Psoas muscle (tissue), 8 donors: ENCODE measurements at regions of chr14 and their contacts with region 1.

Region 1: DNA sequence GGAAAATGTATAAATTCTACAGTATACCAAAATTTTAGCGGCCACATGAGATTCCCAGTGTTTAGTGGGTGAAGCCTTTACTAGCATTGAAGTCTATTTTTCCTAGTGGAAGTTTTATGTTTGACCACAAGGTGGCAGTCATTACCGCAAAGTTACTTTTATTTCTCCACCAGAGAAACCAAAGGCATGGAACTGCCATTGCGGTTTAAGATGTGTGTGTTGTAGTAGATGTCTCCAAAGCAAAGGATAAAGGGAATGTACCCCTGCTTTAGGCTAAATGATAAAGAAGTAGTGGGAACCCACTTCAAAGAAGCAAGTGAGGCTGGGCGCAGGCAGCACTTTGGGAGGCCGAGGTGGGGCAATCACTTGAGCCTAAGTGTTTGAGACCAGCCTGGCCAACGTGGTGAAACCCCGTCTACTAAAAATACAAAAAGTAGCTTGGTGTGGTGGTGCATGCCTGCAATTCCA is 140.5 kb downstream of the PRKCH start:
- DNase-seq: no peak
- ATAC-seq: peak; percentile 63 to 82 (median 72)
- H3K4me3 ChIP-seq: no peak overlapping the region
- H3K27ac ChIP-seq: no peak overlapping the region
- H3K4me1 ChIP-seq: no peaks in the 10 kb centered on the region
- H3K27me3 ChIP-seq: no peaks in the 10 kb centered on the region
- CTCF ChIP-seq: peak; percentile 89

Region 2: DNA sequence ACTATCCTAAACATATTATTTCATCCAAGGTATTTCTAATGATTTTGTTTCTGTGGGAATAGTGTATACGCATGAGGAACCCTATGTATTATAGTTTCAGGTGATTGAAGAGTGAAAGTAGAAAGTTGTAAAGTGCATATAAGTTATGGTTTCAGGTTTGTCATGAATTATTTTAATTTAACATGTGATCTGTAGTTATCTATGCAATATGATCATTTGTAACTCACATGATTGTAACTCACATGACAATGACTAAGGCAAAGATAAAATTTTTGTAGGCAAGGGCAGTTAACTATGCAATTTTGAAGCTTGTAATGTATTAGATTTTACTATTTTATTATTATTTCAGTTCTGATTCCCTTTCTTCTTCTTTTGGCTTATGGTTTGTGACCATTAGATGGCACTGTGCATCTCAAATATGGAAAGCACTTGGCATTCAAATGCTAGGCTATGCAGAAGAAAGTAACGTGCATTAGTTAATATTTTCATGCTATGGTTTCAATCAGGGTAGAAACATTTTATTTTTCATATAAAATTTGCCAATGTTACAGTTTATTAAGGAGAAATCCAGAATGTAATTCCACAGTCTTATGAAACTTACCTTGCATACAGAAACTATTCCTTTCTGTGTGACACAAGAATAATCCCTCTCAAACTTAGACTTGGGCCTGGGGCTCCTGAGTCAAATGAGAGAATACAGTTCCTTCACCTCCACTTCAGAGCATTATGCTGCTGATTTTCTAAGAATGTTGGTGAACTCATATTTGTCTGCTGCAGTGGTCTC is 164.9 kb before region 1 on chr14:
- intact Hi-C with region 1: loop called in 1 of 2 experiments (anchors 5 kb)
- DNase-seq: no peak
- ATAC-seq: peak in 3 of 4 donors; percentile 41 to 80 (median 75)
- H3K4me3 ChIP-seq: no peak overlapping the region
- H3K27ac ChIP-seq: no peak overlapping the region
- H3K4me1 ChIP-seq: peaks cover 15% of the 10 kb centered on the region
- H3K27me3 ChIP-seq: no peaks in the 10 kb centered on the region
- CTCF ChIP-seq: peak; percentile 73

Region 3: GRCh38 chr14:61730756-61731373 is 269.0 kb after region 1 on chr14:
- intact Hi-C with region 1: loop called in 1 of 2 experiments (anchors 5 kb)
- DNase-seq: no peak
- ATAC-seq: peak in 1 of 4 donors; percentile 44
- H3K4me3 ChIP-seq: no peak overlapping the region
- H3K27ac ChIP-seq: no peak overlapping the region
- H3K4me1 ChIP-seq: no peaks in the 10 kb centered on the region
- H3K27me3 ChIP-seq: no peaks in the 10 kb centered on the region
- CTCF ChIP-seq: peak; percentile 48

Region 4: GRCh38 chr14:61837336-61838229 is 375.7 kb after region 1 on chr14:
- intact Hi-C with region 1: loop called (anchors 1 to 2 kb)
- DNase-seq: peak; percentile 64 to 78
- ATAC-seq: peak; percentile 90 to 99 (median 94)
- H3K4me3 ChIP-seq: no peak overlapping the region
- H3K27ac ChIP-seq: no peak overlapping the region
- H3K4me1 ChIP-seq: no peaks in the 10 kb centered on the region
- H3K27me3 ChIP-seq: no peaks in the 10 kb centered on the region
- CTCF ChIP-seq: peak; percentile 96

Region 5: GRCh38 chr14:62126879-62127478 is 665.1 kb after region 1 on chr14:
- intact Hi-C with region 1: loop called (anchors 5 to 10 kb)
- DNase-seq: no peak
- ATAC-seq: peak in 1 of 4 donors; percentile 61
- H3K4me3 ChIP-seq: no peak overlapping the region
- H3K27ac ChIP-seq: no peak overlapping the region
- H3K4me1 ChIP-seq: no peaks in the 10 kb centered on the region
- H3K27me3 ChIP-seq: peaks cover 0 to 20% (median 7%) of the 10 kb centered on the region in 3 donors
- CTCF ChIP-seq: peak; percentile 69